PC-3 (cell line): ENCODE measurements at regions of chr2 and their contacts with region 1.

Region 1: DNA sequence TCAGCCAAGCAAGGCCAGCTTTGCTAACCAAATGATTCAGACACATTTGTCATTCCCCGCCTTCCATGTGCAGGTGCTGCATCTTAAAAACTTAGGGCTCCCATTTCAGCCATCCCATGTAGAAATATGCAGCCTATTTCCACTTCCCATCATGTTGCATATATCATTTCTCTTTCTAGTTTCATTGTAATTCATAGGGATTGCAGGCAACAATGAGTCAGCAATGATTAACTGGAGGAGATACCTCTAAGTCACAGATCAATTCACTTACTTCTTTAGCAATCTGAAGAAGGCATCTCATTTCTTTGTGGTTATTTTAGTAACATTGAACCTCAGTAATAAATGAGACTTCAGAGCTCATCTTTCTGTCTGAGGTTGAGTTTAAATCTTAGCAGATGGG is 276.1 kb upstream of the PKDCC start:
- DNase-seq: no peak
- ATAC-seq: no peak
- H3K4me3 ChIP-seq: no peak overlapping the region
- H3K27ac ChIP-seq: no peak overlapping the region
- H3K4me1 ChIP-seq: no peaks in the 10 kb centered on the region
- H3K27me3 ChIP-seq: peaks cover 37% of the 10 kb centered on the region
- CTCF ChIP-seq: no peak

Region 2: GRCh38 chr2:39821871-39822270 is 1949.8 kb before region 1 on chr2:
- CTCF ChIA-PET with region 1: no interaction called
- POLR2A ChIA-PET with region 1: no interaction called
- intact Hi-C with region 1: loop called (anchors 5 kb)
- DNase-seq: no peak
- ATAC-seq: no peak
- H3K4me3 ChIP-seq: no peak overlapping the region
- H3K27ac ChIP-seq: no peak overlapping the region
- H3K4me1 ChIP-seq: no peaks in the 10 kb centered on the region
- H3K27me3 ChIP-seq: no peaks in the 10 kb centered on the region
- CTCF ChIP-seq: no peak

Region 3: DNA sequence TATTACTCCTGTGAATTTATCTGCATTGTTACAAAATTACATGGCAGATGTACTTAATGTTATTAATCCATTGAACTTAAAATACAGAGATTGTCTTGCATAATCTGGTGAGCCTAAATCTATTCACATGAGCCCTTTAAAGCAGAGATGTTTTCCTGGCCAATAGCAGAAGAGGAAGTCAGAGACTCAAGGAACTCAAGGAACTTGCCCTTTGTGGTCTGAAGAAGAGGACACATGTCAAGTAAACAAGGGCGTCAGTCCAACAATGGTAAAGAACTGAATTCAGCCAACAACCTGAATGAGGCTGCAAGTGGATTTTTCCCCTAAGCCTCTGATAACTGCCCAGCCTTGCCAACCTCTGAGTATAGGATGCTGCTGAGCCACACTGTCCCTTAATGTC is 80.1 kb before region 1 on chr2:
- CTCF ChIA-PET with region 1: no interaction called
- POLR2A ChIA-PET with region 1: no interaction called
- intact Hi-C with region 1: no loop called
- DNase-seq: no peak
- ATAC-seq: no peak
- H3K4me3 ChIP-seq: no peak overlapping the region
- H3K27ac ChIP-seq: no peak overlapping the region
- H3K4me1 ChIP-seq: no peaks in the 10 kb centered on the region
- H3K27me3 ChIP-seq: peaks cover 55% of the 10 kb centered on the region
- CTCF ChIP-seq: no peak